CD14-positive monocyte (primary cell): ENCODE measurements at regions of chr14 and their contacts with region 1.

Region 1: DNA sequence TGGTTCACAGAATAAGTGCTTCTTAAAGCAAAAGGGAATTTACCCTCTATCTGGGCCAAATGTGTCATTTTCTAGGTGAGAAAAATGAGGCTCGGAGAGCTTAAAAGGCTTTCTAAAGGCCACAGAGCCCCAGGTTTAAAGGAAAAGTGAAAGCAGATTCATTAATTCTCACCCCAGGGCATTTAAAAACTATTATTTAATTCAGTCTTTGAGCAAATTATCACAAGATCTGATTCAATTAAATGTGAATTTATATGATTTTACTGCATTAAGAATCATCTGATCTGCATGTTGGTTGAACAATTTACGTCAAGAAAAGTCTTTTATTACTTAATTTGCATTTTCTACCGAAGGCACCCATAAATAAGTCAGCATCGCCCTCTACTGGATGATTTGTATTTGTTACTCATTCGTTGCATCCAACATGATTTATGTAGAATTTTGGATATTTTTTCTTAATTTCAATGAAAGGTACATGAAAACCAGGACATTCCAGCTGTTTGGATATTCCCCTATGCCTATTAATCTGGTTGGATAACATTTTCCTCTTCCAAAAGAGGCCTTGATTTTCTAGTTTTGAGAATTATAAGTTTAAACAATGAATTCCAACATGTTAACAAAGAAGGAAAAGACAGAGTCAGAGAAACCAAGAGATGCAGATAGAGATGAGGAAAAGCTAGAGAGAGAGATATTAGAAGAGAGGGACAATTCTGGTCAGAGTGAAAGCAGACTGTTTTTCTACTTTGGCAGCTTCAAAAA is 19.1 kb upstream of the DHRS7 start:
- DNase-seq: peak; percentile 59 to 80 (median 68)
- H3K4me3 ChIP-seq: peak overlapping the region; percentile 46 to 97 (median 75)
- H3K4me3 Mint-ChIP-seq: peak overlapping the region; percentile 68 to 83
- H3K27ac ChIP-seq: peak overlapping the region in 1 of 2 donors; percentile 81
- H3K27ac Mint-ChIP-seq: peak overlapping the region in 5 of 7 donors; percentile 57 to 86 (median 77)
- H3K4me1 ChIP-seq: peaks cover 5 to 12% of the 10 kb centered on the region in 2 donors
- H3K4me1 Mint-ChIP-seq: peaks cover 10% of the 10 kb centered on the region
- H3K27me3 ChIP-seq: no peaks in the 10 kb centered on the region
- H3K27me3 Mint-ChIP-seq: peaks cover 0 to 2% (median 0%) of the 10 kb centered on the region in 3 donors
- CTCF ChIP-seq: peak; percentile 93

Region 2: DNA sequence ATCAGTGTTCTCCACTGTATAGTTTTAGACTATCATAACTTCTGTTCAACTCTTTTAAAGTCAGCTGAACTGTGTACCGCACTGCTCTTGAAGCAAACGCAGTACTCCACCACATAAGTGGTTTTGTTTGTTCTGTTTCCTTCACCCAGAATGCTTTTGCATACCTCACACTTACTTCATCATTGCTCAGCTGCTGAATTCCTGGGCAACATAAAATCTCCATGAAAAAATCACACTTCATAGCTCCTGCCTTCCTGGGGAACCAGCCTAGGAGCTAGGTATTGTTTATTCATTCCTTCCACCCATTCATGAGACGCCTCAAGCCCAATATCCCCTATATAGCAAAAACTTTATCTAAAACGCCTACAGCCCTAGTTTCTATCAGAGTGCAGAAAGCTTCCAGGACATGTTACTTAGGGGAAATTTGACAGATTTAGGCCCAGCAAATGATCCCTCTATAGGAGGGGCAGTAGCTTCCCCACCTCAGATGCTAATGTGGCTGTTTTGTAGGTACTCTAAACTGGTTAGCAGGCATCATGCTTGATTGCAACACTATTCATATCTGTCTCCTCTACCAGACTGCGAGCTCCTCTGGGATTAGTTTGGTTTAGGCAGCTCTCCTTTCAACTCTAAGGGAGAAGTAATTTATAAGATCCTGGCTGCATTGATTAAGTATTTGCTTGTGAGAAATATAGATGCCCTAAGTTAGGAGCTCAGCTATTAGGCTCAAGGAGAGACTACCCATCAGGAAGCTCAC is 219.9 kb before region 1 on chr14:
- intact Hi-C with region 1: loop called (anchors 2 to 5 kb)
- DNase-seq: no peak
- H3K4me3 ChIP-seq: no peak overlapping the region
- H3K4me3 Mint-ChIP-seq: no peak overlapping the region
- H3K27ac ChIP-seq: no peak overlapping the region
- H3K27ac Mint-ChIP-seq: no peak overlapping the region
- H3K4me1 ChIP-seq: peaks cover 0 to 3% of the 10 kb centered on the region in 2 donors
- H3K4me1 Mint-ChIP-seq: peaks cover 8% of the 10 kb centered on the region
- H3K27me3 ChIP-seq: peaks cover 0 to 3% of the 10 kb centered on the region in 2 donors
- H3K27me3 Mint-ChIP-seq: peaks cover 2 to 4% (median 2%) of the 10 kb centered on the region in 3 donors
- CTCF ChIP-seq: no peak

Region 3: DNA sequence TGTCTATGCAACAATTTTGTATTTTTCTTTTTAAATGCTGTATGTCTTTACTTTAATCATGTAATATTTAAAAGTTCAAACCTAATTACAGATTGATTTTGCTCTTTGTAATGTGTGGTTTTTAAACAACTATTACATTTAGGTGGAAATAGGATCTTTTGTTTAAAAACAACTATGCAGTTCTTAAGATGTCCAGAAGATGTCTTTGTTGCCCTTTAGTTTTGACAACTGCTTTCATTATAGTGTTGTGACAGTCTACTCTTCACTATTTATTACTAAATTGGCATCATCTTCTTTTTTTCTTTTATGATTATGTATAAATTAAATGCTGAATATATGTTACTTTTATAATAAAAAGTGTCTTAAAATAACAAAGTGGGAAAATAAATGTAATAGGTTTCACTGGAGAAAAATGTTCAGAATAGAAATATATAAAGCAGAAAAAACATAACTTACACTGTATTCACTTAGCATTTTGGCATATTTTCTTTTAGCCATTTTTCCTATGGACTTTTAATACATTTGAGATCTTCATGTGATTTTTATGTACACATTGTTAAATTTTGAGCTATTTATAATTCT is 119.7 kb before region 1 on chr14:
- intact Hi-C with region 1: loop called (anchors 5 kb)
- DNase-seq: peak; percentile 5 to 57 (median 36)
- H3K4me3 ChIP-seq: no peak overlapping the region
- H3K4me3 Mint-ChIP-seq: no peak overlapping the region
- H3K27ac ChIP-seq: no peak overlapping the region
- H3K27ac Mint-ChIP-seq: no peak overlapping the region
- H3K4me1 ChIP-seq: no peaks in the 10 kb centered on the region
- H3K4me1 Mint-ChIP-seq: no peaks in the 10 kb centered on the region
- H3K27me3 ChIP-seq: no peaks in the 10 kb centered on the region
- H3K27me3 Mint-ChIP-seq: no peaks in the 10 kb centered on the region
- CTCF ChIP-seq: peak; percentile 80

Region 4: GRCh38 chr14:60151715-60152114 is 32.6 kb before region 1 on chr14:
- intact Hi-C with region 1: no loop called
- DNase-seq: peak; percentile 92 to 96 (median 95)
- H3K4me3 ChIP-seq: no peak overlapping the region
- H3K4me3 Mint-ChIP-seq: no peak overlapping the region
- H3K27ac ChIP-seq: peak overlapping the region; percentile 25 to 96
- H3K27ac Mint-ChIP-seq: peak overlapping the region; percentile 93 to 99 (median 94)
- H3K4me1 ChIP-seq: peaks cover 44 to 58% of the 10 kb centered on the region in 2 donors
- H3K4me1 Mint-ChIP-seq: peaks cover 45% of the 10 kb centered on the region
- H3K27me3 ChIP-seq: no peaks in the 10 kb centered on the region
- H3K27me3 Mint-ChIP-seq: no peaks in the 10 kb centered on the region
- CTCF ChIP-seq: no peak

Region 5: DNA sequence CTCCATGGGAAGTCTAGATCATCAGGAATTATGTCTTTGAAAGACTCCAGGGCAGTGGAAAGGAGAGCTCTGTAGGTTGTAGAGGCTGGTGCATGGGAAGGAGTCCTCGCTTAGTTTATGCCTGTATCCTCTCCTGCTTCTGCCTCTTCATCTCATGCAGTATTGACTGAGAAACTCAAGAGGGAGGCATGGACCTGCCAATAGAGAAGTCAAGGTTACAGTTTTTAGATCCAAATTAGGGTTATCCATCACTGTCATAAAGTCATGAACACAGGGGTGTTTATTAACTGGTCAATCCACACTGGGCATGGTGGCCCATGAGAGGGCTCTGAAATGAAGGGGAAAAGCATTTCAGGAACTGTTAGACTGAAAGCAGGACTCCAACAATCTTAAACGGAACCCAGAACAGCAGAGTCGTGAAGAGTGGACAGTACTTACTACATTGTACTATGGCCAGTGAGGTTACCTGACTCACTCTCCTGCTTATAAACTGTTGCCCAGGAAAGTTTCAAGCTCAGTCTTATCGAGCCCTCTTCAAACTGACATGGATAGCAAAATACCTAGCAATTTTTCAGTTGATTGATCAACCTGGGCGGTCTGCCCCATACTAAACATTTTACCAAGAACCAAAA is 11.0 kb after region 1 on chr14:
- intact Hi-C with region 1: no loop called
- DNase-seq: no peak
- H3K4me3 ChIP-seq: no peak overlapping the region
- H3K4me3 Mint-ChIP-seq: no peak overlapping the region
- H3K27ac ChIP-seq: no peak overlapping the region
- H3K27ac Mint-ChIP-seq: no peak overlapping the region
- H3K4me1 ChIP-seq: peaks cover 8 to 18% of the 10 kb centered on the region in 2 donors
- H3K4me1 Mint-ChIP-seq: peaks cover 16% of the 10 kb centered on the region
- H3K27me3 ChIP-seq: no peaks in the 10 kb centered on the region
- H3K27me3 Mint-ChIP-seq: peaks cover 0 to 1% (median 0%) of the 10 kb centered on the region in 3 donors
- CTCF ChIP-seq: peak; percentile 13